ENCODE measurements at regions of chr12 and their contacts with region 1.

Region 1: GRCh38 chr12:112978163-112979040 is at the start of gene OAS2:
- DNase-seq: peak; percentile 86
- H3K4me3 Mint-ChIP-seq: peak within 1 kb of the TSS; percentile 91
- H3K27ac Mint-ChIP-seq: peak within 1 kb of the TSS; percentile 96
- H3K4me1 Mint-ChIP-seq: peaks cover 35% of the 10 kb centered on the region
- H3K27me3 Mint-ChIP-seq: no peaks in the 10 kb centered on the region
- total RNA-seq, gene OAS2: 86.4 and 88.3 TPM in 2 replicates

Region 2: GRCh38 chr12:112906712-112907414 is 71.5 kb before region 1 on chr12 and contains the start of gene OAS1:
- intact Hi-C with region 1: loop called (anchors 2 kb)
- DNase-seq: peak; percentile 38
- H3K4me3 Mint-ChIP-seq: peak within 1 kb of the TSS; percentile 96
- H3K27ac Mint-ChIP-seq: peak within 1 kb of the TSS; percentile 95
- H3K4me1 Mint-ChIP-seq: peaks cover 54% of the 10 kb centered on the region
- H3K27me3 Mint-ChIP-seq: no peaks in the 10 kb centered on the region
- total RNA-seq, gene OAS1: 17.7 and 17.8 TPM in 2 replicates

Region 3: GRCh38 chr12:112937741-112938719 is 40.4 kb before region 1 on chr12 and contains the start of gene OAS3:
- intact Hi-C with region 1: loop called (anchors 1 kb)
- DNase-seq: peak; percentile 72
- H3K4me3 Mint-ChIP-seq: peak within 1 kb of the TSS; percentile 80
- H3K27ac Mint-ChIP-seq: peak within 1 kb of the TSS; percentile 80
- H3K4me1 Mint-ChIP-seq: peaks cover 40% of the 10 kb centered on the region
- H3K27me3 Mint-ChIP-seq: no peaks in the 10 kb centered on the region
- total RNA-seq, gene OAS3: 27.2 and 29.6 TPM in 2 replicates

Region 4: GRCh38 chr12:112992541-112993398 is 14.4 kb after region 1 on chr12:
- intact Hi-C with region 1: loop called (anchors 1 kb)
- DNase-seq: peak; percentile 47
- H3K4me3 Mint-ChIP-seq: no peak overlapping the region
- H3K27ac Mint-ChIP-seq: peak overlapping the region; percentile 21
- H3K4me1 Mint-ChIP-seq: peaks cover 15% of the 10 kb centered on the region
- H3K27me3 Mint-ChIP-seq: no peaks in the 10 kb centered on the region

Measured in activated T-helper 2 cell treated with anti-CD3 and anti-CD28 coated beads, Interferon-gamma antibody, Interleukin-2, Interleukin-4, amounts not matched to agents 10 μg/mL and 5 μg/mL and 100 μg/mL, durations not matched to agents 14 hours and 24 hours and 36 hours (primary cell).